CD8-positive, alpha-beta T cell (primary cell): ENCODE measurements at regions of chr3 and their contacts with region 1.

Region 1: DNA sequence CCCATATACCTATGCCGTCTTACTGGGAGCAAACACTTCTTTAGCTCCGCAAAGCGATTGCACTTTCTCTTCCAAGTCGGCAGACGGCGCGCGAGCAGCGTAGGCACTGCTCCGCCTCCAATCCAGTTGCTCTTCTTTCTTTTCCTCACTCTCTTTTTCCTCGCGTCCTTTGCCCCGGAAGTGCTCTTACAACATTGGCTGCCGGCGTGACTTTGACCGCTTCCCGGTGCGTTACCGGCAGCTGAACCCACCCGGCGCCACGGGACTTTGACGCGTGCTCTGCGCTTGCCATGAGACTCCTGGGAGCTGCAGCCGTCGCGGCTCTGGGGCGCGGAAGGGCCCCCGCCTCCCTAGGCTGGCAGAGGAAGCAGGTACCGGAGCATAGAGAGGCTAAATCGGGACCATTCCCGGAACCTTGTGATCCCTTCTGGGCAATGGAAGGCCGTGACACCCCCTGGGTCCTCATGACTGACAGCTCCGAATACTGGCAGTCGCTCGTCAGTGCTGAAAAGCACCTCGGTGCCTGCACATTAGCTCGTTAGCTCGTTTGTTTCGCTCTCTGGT is at the start of gene GFM1:
- DNase-seq: peak; percentile 79 to 97 (median 88)
- ATAC-seq: peak; percentile 93
- H3K4me3 ChIP-seq: peak within 1 kb of the TSS; percentile 74 to 92
- H3K4me3 Mint-ChIP-seq: peak within 1 kb of the TSS; percentile 97
- H3K27ac ChIP-seq: peak within 1 kb of the TSS; percentile 70 to 80
- H3K27ac Mint-ChIP-seq: peak within 1 kb of the TSS; percentile 93
- H3K4me1 ChIP-seq: peaks cover 12% of the 10 kb centered on the region
- H3K4me1 Mint-ChIP-seq: peaks cover 49% of the 10 kb centered on the region
- H3K27me3 ChIP-seq: no peaks in the 10 kb centered on the region
- H3K27me3 Mint-ChIP-seq: no peaks in the 10 kb centered on the region
- CTCF ChIP-seq: peak; percentile 90
- total RNA-seq, gene GFM1: 34.7 to 38.7 TPM

Region 2: DNA sequence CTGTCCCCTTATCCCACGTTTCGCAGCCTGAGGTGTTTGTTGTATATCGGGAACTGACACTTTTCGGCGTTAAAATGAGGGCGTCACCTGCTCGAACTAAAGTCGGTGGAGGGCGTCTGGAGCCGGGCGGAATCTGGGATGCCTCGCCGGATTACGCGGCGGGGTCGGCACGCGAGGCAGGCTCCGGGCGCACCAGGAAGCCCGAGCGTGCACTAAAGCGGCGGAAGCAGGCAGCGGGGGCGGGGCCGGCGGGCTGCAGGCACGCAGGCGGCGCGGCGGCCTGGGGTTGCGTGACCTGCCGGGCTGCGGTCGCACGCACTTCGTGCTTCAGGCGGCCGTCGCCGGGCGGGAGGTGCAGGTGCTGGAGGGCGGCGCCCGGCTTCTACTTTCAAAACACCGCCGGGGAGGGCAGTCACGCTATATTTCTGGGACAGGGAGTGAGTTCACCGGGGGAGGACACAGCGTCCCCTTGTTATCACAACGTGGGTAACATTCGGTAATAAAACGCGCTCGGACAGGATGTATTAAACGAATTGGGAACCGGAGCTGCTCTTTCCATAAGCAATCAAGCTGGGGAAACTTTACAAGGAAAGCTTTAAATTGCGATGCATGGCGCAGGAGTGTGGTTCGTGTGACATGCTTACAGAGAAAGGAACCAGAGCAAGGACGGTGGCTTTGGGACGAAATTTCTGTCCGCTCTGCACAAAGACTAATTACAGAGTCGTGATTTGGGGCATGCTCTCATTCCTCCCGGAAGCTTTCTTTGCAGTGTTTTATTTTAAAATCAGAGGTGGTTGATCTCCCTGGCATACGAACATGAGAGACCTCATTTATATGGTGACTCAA is 1827.4 kb before region 1 on chr3:
- CTCF ChIA-PET with region 1: no interaction called
- POLR2A ChIA-PET with region 1: no interaction called
- intact Hi-C with region 1: loop called in 1 of 2 experiments (anchors 10 kb)
- DNase-seq: peak; percentile 53 to 95 (median 85)
- ATAC-seq: peak; percentile 80
- H3K4me3 ChIP-seq: peak overlapping the region; percentile 75 to 88
- H3K4me3 Mint-ChIP-seq: peak overlapping the region; percentile 95
- H3K27ac ChIP-seq: peak overlapping the region; percentile 73 to 78
- H3K27ac Mint-ChIP-seq: peak overlapping the region; percentile 95
- H3K4me1 ChIP-seq: peaks cover 18% of the 10 kb centered on the region
- H3K4me1 Mint-ChIP-seq: peaks cover 38% of the 10 kb centered on the region
- H3K27me3 ChIP-seq: no peaks in the 10 kb centered on the region
- H3K27me3 Mint-ChIP-seq: no peaks in the 10 kb centered on the region
- CTCF ChIP-seq: no peak

Region 3: GRCh38 chr3:157174649-157175498 is 1469.6 kb before region 1 on chr3:
- CTCF ChIA-PET with region 1: no interaction called
- POLR2A ChIA-PET with region 1: no interaction called
- intact Hi-C with region 1: loop called (anchors 5 to 10 kb)
- DNase-seq: peak; percentile 94 to 100 (median 98)
- ATAC-seq: peak; percentile 91
- H3K4me3 ChIP-seq: peak overlapping the region; percentile 73 to 89
- H3K4me3 Mint-ChIP-seq: peak overlapping the region; percentile 92
- H3K27ac ChIP-seq: peak overlapping the region; percentile 96 to 98
- H3K27ac Mint-ChIP-seq: peak overlapping the region; percentile 99
- H3K4me1 ChIP-seq: peaks cover 25% of the 10 kb centered on the region
- H3K4me1 Mint-ChIP-seq: peaks cover 30% of the 10 kb centered on the region
- H3K27me3 ChIP-seq: no peaks in the 10 kb centered on the region
- H3K27me3 Mint-ChIP-seq: no peaks in the 10 kb centered on the region
- CTCF ChIP-seq: no peak

Region 4: DNA sequence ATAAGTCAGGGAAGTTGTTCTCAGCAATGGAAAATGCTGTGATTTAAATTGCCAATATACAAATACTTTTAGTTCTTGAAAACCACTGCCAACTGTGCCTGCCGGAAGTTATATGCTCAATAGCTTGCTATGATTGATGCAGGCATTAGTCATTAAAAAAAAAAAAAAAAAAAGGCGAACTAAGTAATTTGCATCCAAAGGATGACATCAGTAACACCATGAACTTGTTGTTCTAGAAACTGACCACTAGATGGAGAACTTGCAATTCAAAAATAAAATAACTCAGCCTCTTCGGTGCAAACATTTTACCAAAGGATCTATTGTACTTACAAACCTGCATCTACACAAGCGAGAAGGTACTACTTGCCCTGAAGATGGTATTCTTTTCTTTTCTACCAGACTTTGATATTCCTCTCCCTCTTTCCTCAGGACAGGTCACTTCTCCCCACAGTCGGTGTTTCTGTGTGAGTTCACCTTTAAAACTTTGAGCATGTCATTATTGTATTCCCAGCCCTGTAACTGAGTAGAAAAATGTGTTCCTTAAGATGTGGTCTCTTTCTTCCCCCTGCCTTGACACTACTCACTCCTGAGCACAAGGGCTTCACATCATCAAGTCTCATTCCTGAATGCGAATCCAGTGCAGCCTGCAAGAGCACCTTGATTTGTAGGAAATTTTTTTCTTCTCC is 1026.2 kb before region 1 on chr3:
- CTCF ChIA-PET with region 1: no interaction called
- POLR2A ChIA-PET with region 1: no interaction called
- intact Hi-C with region 1: loop called in 1 of 2 experiments (anchors 5 kb)
- DNase-seq: peak in 3 of 9 experiments; percentile 23 to 57 (median 48)
- ATAC-seq: peak; percentile 73
- H3K4me3 ChIP-seq: no peak overlapping the region
- H3K4me3 Mint-ChIP-seq: no peak overlapping the region
- H3K27ac ChIP-seq: no peak overlapping the region
- H3K27ac Mint-ChIP-seq: no peak overlapping the region
- H3K4me1 ChIP-seq: no peaks in the 10 kb centered on the region
- H3K4me1 Mint-ChIP-seq: peaks cover 5% of the 10 kb centered on the region
- H3K27me3 ChIP-seq: no peaks in the 10 kb centered on the region
- H3K27me3 Mint-ChIP-seq: peaks cover 5% of the 10 kb centered on the region
- CTCF ChIP-seq: peak; percentile 61

Region 5: GRCh38 chr3:158539414-158540014 is 104.9 kb before region 1 on chr3:
- CTCF ChIA-PET with region 1: no interaction called
- POLR2A ChIA-PET with region 1: no interaction called
- intact Hi-C with region 1: loop called in 1 of 2 experiments (anchors 5 kb)
- DNase-seq: peak in 7 of 9 experiments; percentile 6 to 63 (median 32)
- ATAC-seq: no peak
- H3K4me3 ChIP-seq: no peak overlapping the region
- H3K4me3 Mint-ChIP-seq: no peak overlapping the region
- H3K27ac ChIP-seq: no peak overlapping the region
- H3K27ac Mint-ChIP-seq: no peak overlapping the region
- H3K4me1 ChIP-seq: no peaks in the 10 kb centered on the region
- H3K4me1 Mint-ChIP-seq: no peaks in the 10 kb centered on the region
- H3K27me3 ChIP-seq: no peaks in the 10 kb centered on the region
- H3K27me3 Mint-ChIP-seq: no peaks in the 10 kb centered on the region
- CTCF ChIP-seq: peak; percentile 61

Region 6: GRCh38 chr3:158659454-158660237 is 15.2 kb after region 1 on chr3:
- CTCF ChIA-PET with region 1: interaction called, 37 read pairs
- POLR2A ChIA-PET with region 1: interaction called, 7 read pairs
- intact Hi-C with region 1: no loop called
- DNase-seq: peak in 6 of 9 experiments; percentile 16 to 60 (median 50)
- ATAC-seq: peak; percentile 83
- H3K4me3 ChIP-seq: no peak overlapping the region
- H3K4me3 Mint-ChIP-seq: no peak overlapping the region
- H3K27ac ChIP-seq: no peak overlapping the region
- H3K27ac Mint-ChIP-seq: no peak overlapping the region
- H3K4me1 ChIP-seq: no peaks in the 10 kb centered on the region
- H3K4me1 Mint-ChIP-seq: peaks cover 5% of the 10 kb centered on the region
- H3K27me3 ChIP-seq: no peaks in the 10 kb centered on the region
- H3K27me3 Mint-ChIP-seq: no peaks in the 10 kb centered on the region
- CTCF ChIP-seq: peak; percentile 52

Region 7: GRCh38 chr3:160399125-160400029 is 1755.0 kb after region 1 on chr3 and contains the starts of genes IFT80 and SMC4:
- CTCF ChIA-PET with region 1: no interaction called
- POLR2A ChIA-PET with region 1: no interaction called
- intact Hi-C with region 1: loop called (anchors 10 kb)
- DNase-seq: peak; percentile 87 to 98 (median 96)
- ATAC-seq: peak; percentile 95
- H3K4me3 ChIP-seq: peak within 1 kb of the TSS; percentile 84 to 85
- H3K4me3 Mint-ChIP-seq: peak within 1 kb of the TSS; percentile 90
- H3K27ac ChIP-seq: peak within 1 kb of the TSS; percentile 85 to 92
- H3K27ac Mint-ChIP-seq: peak within 1 kb of the TSS; percentile 99
- H3K4me1 ChIP-seq: peaks cover 35% of the 10 kb centered on the region
- H3K4me1 Mint-ChIP-seq: peaks cover 56% of the 10 kb centered on the region
- H3K27me3 ChIP-seq: peaks cover 0 to 8% of the 10 kb centered on the region in 2 experiments
- H3K27me3 Mint-ChIP-seq: peaks cover 26% of the 10 kb centered on the region
- CTCF ChIP-seq: no peak
- total RNA-seq, gene IFT80: 9.9 to 12.7 TPM
- total RNA-seq, gene SMC4: 40.8 to 43.5 TPM